Endothelial cell of umbilical vein (primary cell): ENCODE measurements at regions of chr15 and their contacts with region 1.

Region 1: DNA sequence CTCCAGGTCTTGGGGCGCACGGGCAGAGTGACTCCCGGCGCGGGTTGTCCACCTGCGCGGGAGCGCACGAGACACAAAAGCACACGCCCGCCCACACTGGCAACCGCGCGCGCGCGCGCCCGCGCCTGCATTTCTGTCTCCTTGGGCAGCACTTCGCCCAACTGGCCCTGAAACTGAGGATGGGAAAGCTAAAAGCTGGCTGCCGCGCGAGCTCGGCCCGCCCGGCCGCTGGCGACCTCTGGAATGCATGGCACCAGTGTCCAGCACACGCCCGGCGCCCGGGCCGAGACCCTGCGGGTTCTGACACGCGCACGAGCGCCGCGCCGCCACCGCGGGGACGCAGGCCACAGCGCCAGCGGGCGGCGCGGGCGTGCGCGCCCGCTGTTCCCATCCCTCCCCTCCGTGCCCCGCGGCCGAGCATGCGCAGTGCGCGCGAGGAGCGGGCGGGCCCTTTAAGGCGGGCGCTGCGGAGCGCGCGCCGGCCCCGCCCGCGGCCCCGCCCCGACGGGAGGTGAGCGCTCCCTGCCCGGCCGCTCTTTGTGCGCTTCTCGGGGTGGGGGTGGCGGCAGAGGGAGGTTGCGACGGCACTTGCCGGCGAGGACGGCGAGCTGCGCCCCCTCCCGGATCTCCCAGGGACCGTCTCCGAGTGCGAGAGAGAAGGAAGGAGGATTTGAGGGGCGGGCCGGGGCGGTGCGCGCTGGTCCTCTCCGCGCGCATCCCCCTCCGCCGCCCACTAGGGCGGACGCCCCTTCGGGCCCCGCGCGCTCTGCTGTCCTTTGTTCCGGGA is 1.0 kb upstream of the MEX3B start:
- DNase-seq: peak; percentile 94
- H3K4me3 ChIP-seq: peak overlapping the region; percentile 84 to 97 (median 95)
- H3K27ac ChIP-seq: peak overlapping the region; percentile 96
- H3K4me1 ChIP-seq: peaks cover 21% of the 10 kb centered on the region
- H3K27me3 ChIP-seq: peaks cover 1 to 2% of the 10 kb centered on the region in 2 experiments
- CTCF ChIP-seq: peak; percentile 73 to 85
- POLR2A ChIP-seq: peak; percentile 79

Region 2: GRCh38 chr15:81000624-81001151 is 1046.2 kb before region 1 on chr15 and contains the start of gene TLNRD1:
- CTCF ChIA-PET with region 1: no interaction called
- POLR2A ChIA-PET with region 1: no interaction called
- dilution Hi-C with region 1: no loop called
- intact Hi-C with region 1: loop called (anchors 10 kb)
- DNase-seq: peak; percentile 92
- H3K4me3 ChIP-seq: peak within 1 kb of the TSS; percentile 73 to 87 (median 75)
- H3K27ac ChIP-seq: peak within 1 kb of the TSS; percentile 85
- H3K4me1 ChIP-seq: peaks cover 35% of the 10 kb centered on the region
- H3K27me3 ChIP-seq: no peaks in the 10 kb centered on the region
- CTCF ChIP-seq: no peak
- POLR2A ChIP-seq: peak; percentile 91
- total RNA-seq, gene TLNRD1: 33.0 and 33.2 TPM in 2 replicates

Region 3: DNA sequence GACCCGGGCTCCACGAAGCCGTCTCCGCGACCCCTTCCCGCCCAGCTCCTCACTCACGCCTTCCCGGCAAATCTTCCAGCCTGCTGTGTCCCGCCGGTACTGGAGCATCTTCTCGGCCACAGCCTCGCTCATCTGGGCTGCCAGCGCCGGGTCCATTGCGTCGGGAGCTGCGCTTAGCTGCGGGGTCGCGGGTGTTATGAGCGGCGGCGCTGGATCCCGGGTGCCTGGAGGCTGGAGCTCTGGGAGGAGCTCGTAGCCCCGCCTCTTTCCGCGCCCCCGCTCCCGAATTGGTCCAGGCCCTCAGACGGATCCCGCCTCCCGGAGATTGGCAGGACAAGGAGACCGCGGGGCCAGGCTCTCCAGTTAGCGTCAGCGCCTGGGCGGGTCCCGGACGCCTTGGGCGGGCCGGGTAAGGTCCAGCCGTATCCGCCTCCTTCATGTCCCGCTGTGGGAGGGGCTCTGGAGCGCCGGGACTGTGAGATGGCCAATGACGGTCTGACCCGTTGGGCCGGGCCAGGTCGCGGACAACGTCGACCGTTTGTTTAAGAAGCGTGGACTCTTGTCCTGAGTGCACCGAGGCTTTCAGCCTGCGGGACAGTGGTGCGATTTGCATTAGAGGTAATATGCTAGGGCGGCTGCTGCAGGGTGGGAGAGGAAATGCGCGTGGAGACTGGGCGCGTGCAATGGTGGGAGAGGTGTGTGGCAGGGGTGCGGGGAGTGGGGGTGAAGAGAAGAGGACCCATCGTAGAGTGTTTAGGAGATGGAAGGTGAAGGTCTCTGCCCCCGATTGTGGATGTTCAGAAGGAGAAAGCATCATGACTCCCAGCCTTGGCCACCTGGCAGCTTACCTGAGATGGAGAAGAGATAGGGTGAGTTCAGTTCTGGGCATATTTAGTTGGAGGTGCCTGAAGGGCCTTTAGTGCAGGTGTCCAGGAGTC is 722.6 kb before region 1 on chr15 and contains the start of gene STARD5:
- CTCF ChIA-PET with region 1: no interaction called
- POLR2A ChIA-PET with region 1: no interaction called
- dilution Hi-C with region 1: no loop called
- intact Hi-C with region 1: loop called (anchors 2 kb)
- DNase-seq: peak; percentile 97
- H3K4me3 ChIP-seq: peak within 1 kb of the TSS; percentile 77 to 89 (median 79)
- H3K27ac ChIP-seq: peak within 1 kb of the TSS; percentile 36
- H3K4me1 ChIP-seq: peaks cover 8% of the 10 kb centered on the region
- H3K27me3 ChIP-seq: peaks cover 0 to 3% of the 10 kb centered on the region in 2 experiments
- CTCF ChIP-seq: no peak
- POLR2A ChIP-seq: peak; percentile 46
- total RNA-seq, gene STARD5: 0.32 and 2.2 TPM in 2 replicates

Region 4: DNA sequence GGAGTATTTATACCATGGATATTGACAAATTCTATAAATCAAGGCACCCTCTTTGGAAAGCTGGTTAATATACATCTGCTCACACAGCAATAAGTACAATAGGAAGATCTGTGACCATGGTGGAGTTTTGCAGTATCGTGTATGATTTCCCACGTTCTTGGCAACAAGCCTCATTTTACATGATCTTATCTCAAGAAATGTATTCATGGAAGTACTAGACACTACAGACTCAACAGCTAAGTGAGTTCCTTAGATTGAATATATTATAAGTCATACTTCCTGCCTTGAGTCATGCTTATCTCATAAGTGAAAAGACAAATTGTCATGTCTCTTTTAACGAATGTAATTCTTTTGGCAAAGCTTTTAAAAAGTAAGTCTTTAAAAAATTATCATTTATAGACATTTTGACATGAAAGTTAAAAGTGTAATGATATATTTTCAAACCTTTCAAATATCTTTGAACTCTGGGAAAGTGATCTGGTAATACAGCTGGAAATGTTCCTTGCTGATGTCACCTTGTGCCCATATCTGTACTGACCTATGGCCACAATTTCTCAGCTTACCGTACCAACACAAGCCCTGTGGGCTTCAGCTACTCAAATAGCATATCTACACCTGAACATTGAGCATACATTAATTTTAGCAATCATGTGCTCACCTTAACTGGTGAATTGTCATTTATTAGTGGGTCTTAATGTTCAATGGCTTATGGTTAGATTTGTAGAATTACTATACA is 542.5 kb before region 1 on chr15:
- CTCF ChIA-PET with region 1: interaction called, 6 read pairs
- POLR2A ChIA-PET with region 1: interaction called, 3 read pairs
- dilution Hi-C with region 1: no loop called
- intact Hi-C with region 1: loop called (anchors 1 kb)
- DNase-seq: peak; percentile 96
- H3K4me3 ChIP-seq: no peak overlapping the region
- H3K27ac ChIP-seq: peak overlapping the region; percentile 82
- H3K4me1 ChIP-seq: peaks cover 19% of the 10 kb centered on the region
- H3K27me3 ChIP-seq: no peaks in the 10 kb centered on the region
- CTCF ChIP-seq: no peak
- POLR2A ChIP-seq: no peak

Region 5: DNA sequence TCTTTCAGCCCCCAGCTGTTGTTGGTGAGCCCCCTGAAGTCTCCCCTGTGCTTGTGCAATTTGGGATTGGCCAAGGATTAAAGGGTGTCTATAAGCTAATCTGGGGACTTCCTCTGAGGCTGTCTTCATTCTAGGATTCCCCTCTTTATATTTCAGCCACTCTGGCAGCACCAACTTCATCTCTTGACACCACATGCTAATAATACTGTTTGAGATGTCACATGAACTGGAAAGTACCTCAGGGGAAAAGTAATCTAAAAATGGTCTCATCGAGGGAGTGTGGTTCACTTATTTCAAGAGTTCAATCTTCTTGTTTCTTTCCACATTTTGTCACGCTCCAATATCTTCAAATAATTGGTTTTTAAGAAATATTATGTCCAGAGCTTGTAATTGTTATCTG is 393.6 kb before region 1 on chr15:
- CTCF ChIA-PET with region 1: no interaction called
- POLR2A ChIA-PET with region 1: no interaction called
- dilution Hi-C with region 1: no loop called
- intact Hi-C with region 1: no loop called
- DNase-seq: no peak
- H3K4me3 ChIP-seq: no peak overlapping the region
- H3K27ac ChIP-seq: no peak overlapping the region
- H3K4me1 ChIP-seq: no peaks in the 10 kb centered on the region
- H3K27me3 ChIP-seq: no peaks in the 10 kb centered on the region
- CTCF ChIP-seq: no peak
- POLR2A ChIP-seq: no peak

Region 6: GRCh38 chr15:82108489-82109078 is 61.7 kb after region 1 on chr15:
- CTCF ChIA-PET with region 1: interaction called, 30 read pairs
- POLR2A ChIA-PET with region 1: interaction called, 5 read pairs
- dilution Hi-C with region 1: no loop called
- intact Hi-C with region 1: loop called (anchors 5 kb)
- DNase-seq: peak; percentile 60
- H3K4me3 ChIP-seq: no peak overlapping the region
- H3K27ac ChIP-seq: no peak overlapping the region
- H3K4me1 ChIP-seq: no peaks in the 10 kb centered on the region
- H3K27me3 ChIP-seq: no peaks in the 10 kb centered on the region
- CTCF ChIP-seq: peak; percentile 71 to 87
- POLR2A ChIP-seq: no peak

Region 7: GRCh38 chr15:82262422-82263026 is 215.7 kb after region 1 on chr15 and contains the starts of genes EFL1 and SAXO2:
- CTCF ChIA-PET with region 1: no interaction called
- POLR2A ChIA-PET with region 1: no interaction called
- dilution Hi-C with region 1: no loop called
- intact Hi-C with region 1: loop called (anchors 2 kb)
- DNase-seq: peak; percentile 82
- H3K4me3 ChIP-seq: peak within 1 kb of the TSS; percentile 36 to 76 (median 65)
- H3K27ac ChIP-seq: peak within 1 kb of the TSS; percentile 65
- H3K4me1 ChIP-seq: peaks cover 20% of the 10 kb centered on the region
- H3K27me3 ChIP-seq: no peaks in the 10 kb centered on the region
- CTCF ChIP-seq: no peak
- POLR2A ChIP-seq: peak; percentile 22
- total RNA-seq, gene EFL1: 21.9 and 22.0 TPM in 2 replicates
- total RNA-seq, gene SAXO2: 0.67 and 5.2 TPM in 2 replicates